Activated CD4-positive, alpha-beta memory T cell treated with anti-CD3 and anti-CD28 coated beads for 36 hours (primary cell): ENCODE measurements at regions of chr9 and their contacts with region 1.

Region 1: GRCh38 chr9:14314929-14315645 is 1.1 kb upstream of the NFIB start:
- DNase-seq: peak; percentile 24
- H3K4me3 Mint-ChIP-seq: peak overlapping the region; percentile 70
- H3K27ac Mint-ChIP-seq: no peak overlapping the region
- H3K4me1 Mint-ChIP-seq: peaks cover 17% of the 10 kb centered on the region
- H3K27me3 Mint-ChIP-seq: peaks cover 51% of the 10 kb centered on the region

Region 2: DNA sequence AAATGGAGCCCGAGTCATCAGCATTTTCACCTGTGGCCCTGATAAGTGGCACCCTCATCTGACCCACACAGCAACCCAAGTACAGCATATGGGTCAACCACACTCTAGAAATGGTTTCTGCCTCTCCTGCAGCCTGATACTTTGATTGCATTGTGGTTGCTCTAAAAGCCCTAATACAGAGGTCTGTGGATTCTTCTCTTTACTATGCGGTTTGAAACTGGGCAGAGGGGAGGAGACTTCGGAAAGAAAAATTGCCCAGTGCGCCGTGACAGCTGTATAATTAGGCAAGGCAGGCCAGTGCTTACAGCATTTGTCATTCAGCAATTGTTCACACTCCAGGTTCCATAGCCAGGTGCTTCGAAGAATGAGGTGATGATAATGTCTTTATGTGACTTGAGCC is 362.2 kb before region 1 on chr9:
- CTCF ChIA-PET with region 1: no interaction called
- POLR2A ChIA-PET with region 1: no interaction called
- intact Hi-C with region 1: no loop called
- DNase-seq: no peak
- H3K4me3 Mint-ChIP-seq: no peak overlapping the region
- H3K27ac Mint-ChIP-seq: no peak overlapping the region
- H3K4me1 Mint-ChIP-seq: no peaks in the 10 kb centered on the region
- H3K27me3 Mint-ChIP-seq: no peaks in the 10 kb centered on the region

Region 3: DNA sequence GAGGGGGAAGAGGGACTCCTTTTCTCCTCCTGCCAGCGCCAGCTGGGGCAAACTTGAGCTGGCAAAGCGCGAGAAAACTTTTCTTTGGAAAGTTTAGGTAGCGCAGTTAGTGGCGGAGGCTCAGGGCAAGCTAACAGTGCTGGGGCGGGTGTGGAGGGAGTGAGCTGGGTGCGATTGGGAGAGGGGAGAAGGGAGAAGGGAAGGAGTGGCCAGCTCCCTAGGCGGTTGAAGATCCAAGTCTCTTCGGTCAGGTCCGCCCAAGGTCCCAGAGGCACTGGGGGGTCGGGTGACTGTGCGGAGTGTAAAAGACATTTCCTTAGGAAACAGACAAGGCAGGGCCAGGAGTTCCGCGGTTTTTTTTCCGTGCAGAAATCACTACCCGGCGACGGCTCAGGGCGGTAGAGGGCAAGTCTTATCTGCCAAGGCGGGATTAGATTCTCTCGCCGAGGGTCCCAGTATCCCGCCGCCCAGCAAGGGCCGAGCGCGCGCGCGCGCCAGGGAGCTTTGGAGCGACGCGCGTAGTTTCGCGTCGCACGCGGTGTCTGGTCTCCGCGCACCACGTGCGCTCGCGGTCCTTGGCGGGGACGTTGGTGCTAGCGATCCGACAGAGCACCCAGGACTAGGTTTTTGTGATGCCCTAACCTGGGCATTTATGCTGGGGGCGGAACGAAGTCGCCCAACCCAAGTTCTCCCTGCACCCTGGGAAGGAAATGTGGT is 32.5 kb after region 1 on chr9:
- CTCF ChIA-PET with region 1: no interaction called
- POLR2A ChIA-PET with region 1: no interaction called
- intact Hi-C with region 1: loop called (anchors 2 kb)
- DNase-seq: no peak
- H3K4me3 Mint-ChIP-seq: no peak overlapping the region
- H3K27ac Mint-ChIP-seq: no peak overlapping the region
- H3K4me1 Mint-ChIP-seq: peaks cover 16% of the 10 kb centered on the region
- H3K27me3 Mint-ChIP-seq: peaks cover 53% of the 10 kb centered on the region